ENCODE measurements at regions of chr1 and their contacts with region 1.

Region 1: GRCh38 chr1:95233737-95234500 is at the start of gene RWDD3:
- DNase-seq: peak; percentile 91 to 96 (median 93)
- H3K4me3 ChIP-seq: peak within 1 kb of the TSS; percentile 58 to 81
- H3K4me3 Mint-ChIP-seq: peak within 1 kb of the TSS; percentile 89 to 95 (median 90)
- H3K27ac ChIP-seq: peak within 1 kb of the TSS; percentile 69
- H3K27ac Mint-ChIP-seq: peak within 1 kb of the TSS; percentile 86 to 94 (median 91)
- H3K4me1 ChIP-seq: peaks cover 29% of the 10 kb centered on the region
- H3K4me1 Mint-ChIP-seq: peaks cover 22 to 54% (median 42%) of the 10 kb centered on the region in 4 donors
- H3K27me3 ChIP-seq: no peaks in the 10 kb centered on the region
- H3K27me3 Mint-ChIP-seq: peaks cover 6 to 10% of the 10 kb centered on the region in 2 donors
- total RNA-seq, gene RWDD3: 22.5 to 27.5 TPM

Region 2: DNA sequence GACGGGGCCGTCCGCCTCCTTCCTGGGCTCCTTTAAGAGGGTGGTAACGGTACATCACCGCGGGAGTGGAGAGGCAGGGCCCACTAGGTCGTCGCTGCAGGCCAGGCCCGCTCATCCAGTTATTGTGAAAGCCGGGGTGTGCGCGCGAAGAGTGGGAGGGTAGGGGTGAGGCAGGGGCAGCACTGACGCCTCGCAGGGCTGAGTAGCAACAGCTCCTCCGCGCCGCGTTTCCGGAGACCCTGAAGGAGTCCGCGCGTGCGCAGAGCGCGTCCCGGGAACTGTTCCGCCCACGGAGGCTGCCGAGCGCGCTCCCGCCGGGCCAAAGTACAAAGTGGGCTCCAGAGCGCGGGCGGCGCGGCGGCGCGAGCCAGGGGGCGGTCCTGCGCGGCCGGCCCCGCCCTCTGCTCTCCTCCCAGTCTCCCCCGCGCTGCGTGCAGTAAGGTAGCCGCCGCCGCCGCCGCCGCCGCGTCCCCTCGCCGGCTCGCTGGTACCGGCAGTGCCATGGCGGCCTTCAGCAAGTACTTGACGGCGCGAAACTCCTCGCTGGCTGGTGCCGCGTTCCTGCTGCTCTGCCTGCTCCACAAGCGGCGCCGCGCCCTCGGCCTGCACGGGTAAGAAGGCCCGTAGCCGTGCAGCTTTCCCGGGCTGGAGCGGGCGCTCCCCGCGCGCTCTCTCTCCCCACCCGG is 815.8 kb before region 1 on chr1 and contains the start of gene ABCD3:
- CTCF ChIA-PET with region 1: interaction called, 5 read pairs
- POLR2A ChIA-PET with region 1: interaction called, 4 read pairs
- intact Hi-C with region 1: loop called (anchors 1 kb)
- DNase-seq: peak; percentile 96 to 99 (median 98)
- H3K4me3 ChIP-seq: peak within 1 kb of the TSS; percentile 59 to 88
- H3K4me3 Mint-ChIP-seq: peak within 1 kb of the TSS in 2 of 8 donors; percentile 90 to 91
- H3K27ac ChIP-seq: peak within 1 kb of the TSS; percentile 70
- H3K27ac Mint-ChIP-seq: peak within 1 kb of the TSS in 6 of 7 donors; percentile 37 to 92 (median 88)
- H3K4me1 ChIP-seq: peaks cover 46% of the 10 kb centered on the region
- H3K4me1 Mint-ChIP-seq: peaks cover 23 to 40% (median 28%) of the 10 kb centered on the region in 4 donors
- H3K27me3 ChIP-seq: no peaks in the 10 kb centered on the region
- H3K27me3 Mint-ChIP-seq: peaks cover 0 to 4% of the 10 kb centered on the region in 2 donors
- total RNA-seq, gene ABCD3: 23.6 to 23.8 TPM

Region 3: DNA sequence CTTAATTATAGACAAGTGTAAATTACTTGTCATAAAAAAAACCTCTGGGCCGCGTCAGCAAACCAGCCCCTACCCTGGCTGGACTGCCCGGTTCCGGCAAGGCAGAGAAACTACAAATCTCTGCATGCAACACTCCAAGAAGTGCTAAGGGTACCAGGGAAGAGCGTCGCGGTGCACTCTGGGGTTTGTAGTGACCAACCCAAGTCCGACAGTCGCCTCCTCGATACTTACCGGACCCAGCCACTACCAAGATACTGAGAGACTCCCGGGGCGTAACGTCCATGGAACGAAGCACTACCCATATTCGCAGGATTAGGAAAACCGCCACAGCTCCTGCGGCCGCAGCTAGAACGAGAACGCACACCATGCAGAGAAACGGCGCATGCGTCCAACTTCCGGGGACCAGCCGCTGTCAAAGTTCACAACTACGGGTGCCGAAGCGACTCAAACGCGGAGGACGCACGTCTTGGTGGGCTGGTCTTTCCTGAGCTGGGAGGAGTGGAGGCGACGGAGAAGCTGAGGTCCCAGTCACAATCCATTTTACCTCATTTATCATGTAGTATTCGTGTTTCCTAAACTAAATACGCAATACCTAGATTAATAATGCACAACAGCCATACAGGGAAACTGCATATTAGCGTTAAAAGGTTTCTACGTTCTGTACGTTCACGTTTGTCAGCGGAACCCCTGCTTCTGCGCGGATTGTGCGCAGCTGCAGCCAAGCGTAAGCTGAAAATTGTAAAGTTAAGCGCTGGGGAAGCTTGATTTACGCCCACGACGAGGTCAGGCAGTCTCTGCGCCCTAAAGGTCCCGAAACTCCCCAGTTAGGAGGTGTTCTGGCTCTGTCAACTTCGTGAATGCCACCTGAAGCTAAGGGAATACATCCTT is 161.1 kb before region 1 on chr1 and contains the start of gene ALG14:
- CTCF ChIA-PET with region 1: interaction called, 29 read pairs
- POLR2A ChIA-PET with region 1: interaction called, 45 read pairs
- intact Hi-C with region 1: loop called (anchors 1 kb)
- DNase-seq: peak; percentile 94 to 96 (median 95)
- H3K4me3 ChIP-seq: peak within 1 kb of the TSS; percentile 93 to 96
- H3K4me3 Mint-ChIP-seq: peak within 1 kb of the TSS; percentile 96 to 99 (median 98)
- H3K27ac ChIP-seq: peak within 1 kb of the TSS; percentile 83
- H3K27ac Mint-ChIP-seq: peak within 1 kb of the TSS; percentile 96 to 99 (median 98)
- H3K4me1 ChIP-seq: peaks cover 14% of the 10 kb centered on the region
- H3K4me1 Mint-ChIP-seq: peaks cover 12 to 21% (median 18%) of the 10 kb centered on the region in 4 donors
- H3K27me3 ChIP-seq: no peaks in the 10 kb centered on the region
- H3K27me3 Mint-ChIP-seq: peaks cover 2 to 5% of the 10 kb centered on the region in 2 donors
- total RNA-seq, gene ALG14: 1.1 to 3.2 TPM

Region 4: DNA sequence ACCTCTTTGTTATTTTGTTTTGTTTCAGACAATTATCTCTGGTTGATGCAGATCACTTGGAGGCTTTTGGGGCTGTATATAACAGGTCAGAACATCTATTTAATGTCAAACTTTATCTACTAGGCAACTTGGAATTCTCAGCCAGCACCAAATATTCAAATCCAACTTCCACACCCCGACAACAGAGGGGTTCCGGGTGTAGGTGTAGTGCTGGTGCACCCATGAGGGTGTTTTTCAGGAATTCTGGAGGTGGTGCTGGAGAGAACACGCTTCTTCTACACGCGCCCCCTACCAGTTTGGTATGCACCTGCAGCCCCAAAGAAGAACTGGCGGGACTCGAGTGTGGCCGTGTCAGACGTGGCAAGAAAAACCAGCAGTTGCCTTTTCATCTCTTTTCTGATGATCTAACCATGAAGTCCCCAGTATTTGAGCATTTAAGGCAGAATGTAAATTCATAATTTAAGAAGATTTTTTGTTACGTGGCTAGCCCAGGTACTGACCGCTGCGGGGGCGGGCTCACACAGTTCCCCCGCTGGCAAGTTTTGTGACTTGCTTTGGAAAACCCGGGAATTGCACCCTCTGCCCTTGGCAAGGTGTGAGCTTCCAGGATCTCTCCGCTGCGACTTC is 117.2 kb before region 1 on chr1:
- CTCF ChIA-PET with region 1: interaction called, 10 read pairs
- POLR2A ChIA-PET with region 1: interaction called, 27 read pairs
- intact Hi-C with region 1: loop called (anchors 2 kb)
- DNase-seq: peak; percentile 39 to 61 (median 49)
- H3K4me3 ChIP-seq: peak overlapping the region; percentile 43 to 53
- H3K4me3 Mint-ChIP-seq: peak overlapping the region; percentile 90 to 93 (median 93)
- H3K27ac ChIP-seq: no peak overlapping the region
- H3K27ac Mint-ChIP-seq: peak overlapping the region in 6 of 7 donors; percentile 51 to 88 (median 80)
- H3K4me1 ChIP-seq: peaks cover 12% of the 10 kb centered on the region
- H3K4me1 Mint-ChIP-seq: peaks cover 4 to 16% (median 9%) of the 10 kb centered on the region in 4 donors
- H3K27me3 ChIP-seq: peaks cover 18% of the 10 kb centered on the region
- H3K27me3 Mint-ChIP-seq: peaks cover 17 to 33% of the 10 kb centered on the region in 2 donors

Region 5: GRCh38 chr1:95201905-95202304 is 32.0 kb before region 1 on chr1:
- CTCF ChIA-PET with region 1: no interaction called
- POLR2A ChIA-PET with region 1: no interaction called
- intact Hi-C with region 1: no loop called
- DNase-seq: no peak
- H3K4me3 ChIP-seq: no peak overlapping the region
- H3K4me3 Mint-ChIP-seq: no peak overlapping the region
- H3K27ac ChIP-seq: no peak overlapping the region
- H3K27ac Mint-ChIP-seq: no peak overlapping the region
- H3K4me1 ChIP-seq: no peaks in the 10 kb centered on the region
- H3K4me1 Mint-ChIP-seq: no peaks in the 10 kb centered on the region
- H3K27me3 ChIP-seq: no peaks in the 10 kb centered on the region
- H3K27me3 Mint-ChIP-seq: peaks cover 0 to 6% of the 10 kb centered on the region in 2 donors

Region 6: GRCh38 chr1:95245029-95245428 is 11.1 kb after region 1 on chr1:
- CTCF ChIA-PET with region 1: interaction called, 24 read pairs
- POLR2A ChIA-PET with region 1: interaction called, 5 read pairs
- intact Hi-C with region 1: no loop called
- DNase-seq: no peak
- H3K4me3 ChIP-seq: no peak overlapping the region
- H3K4me3 Mint-ChIP-seq: no peak overlapping the region
- H3K27ac ChIP-seq: no peak overlapping the region
- H3K27ac Mint-ChIP-seq: no peak overlapping the region
- H3K4me1 ChIP-seq: no peaks in the 10 kb centered on the region
- H3K4me1 Mint-ChIP-seq: peaks cover 8 to 33% (median 23%) of the 10 kb centered on the region in 4 donors
- H3K27me3 ChIP-seq: no peaks in the 10 kb centered on the region
- H3K27me3 Mint-ChIP-seq: no peaks in the 10 kb centered on the region